Activated naive CD4-positive, alpha-beta T cell treated with anti-CD3 and anti-CD28 coated beads for 36 hours (primary cell): ENCODE measurements at regions of chr1 and their contacts with region 1.

Region 1: DNA sequence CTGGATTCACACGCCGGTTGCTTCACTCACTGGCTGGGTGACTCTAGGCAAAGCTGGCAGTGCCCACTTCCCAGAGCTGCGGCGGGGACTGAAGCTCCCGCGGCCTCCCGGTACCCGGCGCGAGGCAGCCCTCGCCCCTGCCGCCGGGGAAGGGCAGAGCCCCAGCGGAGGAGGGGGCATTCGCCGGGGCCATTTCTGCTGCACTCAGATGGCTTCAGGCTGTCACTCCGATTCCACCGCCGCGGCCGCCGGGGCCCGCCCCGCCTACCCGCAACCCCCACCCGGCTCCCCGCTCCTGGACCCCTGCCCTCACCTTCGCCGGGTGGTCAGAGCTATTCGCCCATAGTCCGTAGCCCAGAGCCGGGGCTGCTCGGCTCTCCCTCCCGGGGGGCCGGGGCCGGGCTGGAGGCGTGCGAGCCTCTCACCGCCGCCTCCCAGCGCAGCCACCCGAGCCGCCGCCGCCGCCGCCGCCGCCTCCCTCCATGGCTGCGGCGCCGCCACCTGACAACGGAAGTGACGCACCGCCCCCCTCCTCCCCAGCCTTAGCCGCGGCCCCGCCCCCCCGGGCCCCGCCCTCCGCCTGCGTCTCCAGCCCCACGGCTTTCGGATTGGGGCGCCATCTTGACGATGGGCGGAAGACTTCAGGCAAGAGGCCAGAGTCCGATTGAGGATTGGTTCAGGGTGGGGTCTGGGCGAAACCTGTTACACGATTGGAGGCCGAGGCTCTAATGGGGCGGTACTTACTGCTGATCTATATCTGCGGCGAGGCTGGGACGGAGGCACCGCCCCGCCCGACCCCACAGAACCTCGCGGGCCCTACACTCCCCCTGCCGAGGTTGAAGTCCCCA is at the start of gene STK40:
- DNase-seq: peak; percentile 99
- H3K4me3 Mint-ChIP-seq: peak within 1 kb of the TSS; percentile 92
- H3K27ac Mint-ChIP-seq: peak within 1 kb of the TSS; percentile 99
- H3K4me1 Mint-ChIP-seq: peaks cover 55% of the 10 kb centered on the region
- H3K27me3 Mint-ChIP-seq: no peaks in the 10 kb centered on the region
- total RNA-seq, gene STK40: 39.6 to 40.6 TPM

Region 2: DNA sequence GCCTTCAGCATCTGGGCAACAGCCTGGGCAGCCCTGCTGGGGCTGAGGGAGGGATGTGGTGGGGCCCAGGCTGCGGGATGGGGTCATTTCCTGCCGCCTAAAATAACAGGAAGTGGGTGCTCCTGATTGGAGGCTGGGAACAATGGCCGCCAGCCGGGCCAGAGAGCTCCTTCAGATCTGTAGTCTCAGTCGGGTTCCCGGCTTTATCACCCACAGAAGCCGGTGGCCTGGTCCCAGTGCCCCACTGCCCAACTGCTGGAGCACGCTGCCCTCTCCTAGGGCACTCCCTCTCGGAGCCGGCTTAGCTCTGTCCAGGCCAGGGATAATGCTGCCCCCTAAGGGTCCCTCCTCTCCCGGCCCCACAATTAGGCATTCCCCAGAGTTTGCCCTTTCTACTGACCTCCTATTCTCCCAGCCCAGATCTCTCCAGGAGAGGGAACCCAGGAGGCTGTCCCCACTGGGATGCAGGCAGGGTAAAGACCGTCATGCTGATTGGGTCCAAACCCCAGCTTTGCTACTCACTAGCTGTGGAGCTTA is 224.6 kb before region 1 on chr1:
- CTCF ChIA-PET with region 1: no interaction called
- intact Hi-C with region 1: loop called (anchors 2 kb)
- DNase-seq: peak; percentile 89
- H3K4me3 Mint-ChIP-seq: peak overlapping the region; percentile 83
- H3K27ac Mint-ChIP-seq: peak overlapping the region; percentile 93
- H3K4me1 Mint-ChIP-seq: peaks cover 57% of the 10 kb centered on the region
- H3K27me3 Mint-ChIP-seq: no peaks in the 10 kb centered on the region

Region 3: GRCh38 chr1:36306902-36307456 is 78.7 kb before region 1 on chr1:
- CTCF ChIA-PET with region 1: no interaction called
- intact Hi-C with region 1: loop called (anchors 1 kb)
- DNase-seq: peak; percentile 89
- H3K4me3 Mint-ChIP-seq: peak overlapping the region; percentile 96
- H3K27ac Mint-ChIP-seq: no peak overlapping the region
- H3K4me1 Mint-ChIP-seq: peaks cover 48% of the 10 kb centered on the region
- H3K27me3 Mint-ChIP-seq: no peaks in the 10 kb centered on the region

Region 4: DNA sequence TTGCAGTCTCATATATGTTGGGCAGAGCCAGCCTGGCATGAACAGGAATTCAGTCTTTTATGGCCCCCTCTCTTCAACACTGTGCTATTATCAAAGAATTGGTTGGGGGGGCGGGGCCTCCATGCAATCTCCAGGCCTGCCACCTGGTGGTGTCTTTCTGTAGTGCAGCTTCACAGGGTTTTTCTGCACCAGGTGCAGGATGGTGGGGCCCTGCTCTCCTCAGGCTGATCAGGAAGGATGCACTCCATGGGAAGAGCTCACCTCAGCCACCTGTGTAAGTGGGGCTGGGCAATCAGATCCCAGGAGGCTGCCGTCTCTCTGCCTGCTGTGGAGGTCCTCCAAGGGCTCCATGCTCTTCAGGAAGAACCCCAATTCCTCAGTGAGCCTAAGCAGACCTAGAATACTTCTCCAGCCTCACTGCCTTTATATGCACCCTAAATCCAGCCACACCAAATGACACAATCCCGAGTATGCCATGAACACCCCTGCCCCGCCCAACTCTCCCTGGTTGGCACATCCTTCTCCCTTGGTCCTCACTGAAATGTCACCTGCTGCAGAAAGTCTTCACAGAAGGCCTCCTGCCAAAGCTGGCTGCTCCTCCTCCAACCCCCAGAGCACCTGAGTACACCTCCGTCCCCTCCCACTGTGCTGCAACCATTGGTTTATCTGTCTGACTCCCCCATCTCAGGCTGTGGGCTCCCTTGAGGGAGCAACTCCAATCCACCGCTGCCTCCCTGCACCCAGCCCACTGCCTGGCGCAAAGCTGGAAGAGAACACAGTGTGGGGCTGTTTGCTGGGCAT is 16.4 kb before region 1 on chr1:
- CTCF ChIA-PET with region 1: interaction called, 22 read pairs
- intact Hi-C with region 1: no loop called
- DNase-seq: peak; percentile 93
- H3K4me3 Mint-ChIP-seq: no peak overlapping the region
- H3K27ac Mint-ChIP-seq: peak overlapping the region; percentile 65
- H3K4me1 Mint-ChIP-seq: peaks cover 67% of the 10 kb centered on the region
- H3K27me3 Mint-ChIP-seq: no peaks in the 10 kb centered on the region

Region 5: GRCh38 chr1:36420836-36421664 is 35.4 kb after region 1 on chr1:
- CTCF ChIA-PET with region 1: interaction called, 5 read pairs
- intact Hi-C with region 1: loop called (anchors 1 kb)
- DNase-seq: peak; percentile 97
- H3K4me3 Mint-ChIP-seq: peak overlapping the region; percentile 45
- H3K27ac Mint-ChIP-seq: peak overlapping the region; percentile 93
- H3K4me1 Mint-ChIP-seq: peaks cover 20% of the 10 kb centered on the region
- H3K27me3 Mint-ChIP-seq: no peaks in the 10 kb centered on the region